ENCODE measurements at regions of chrX and their contacts with region 1.

Region 1: GRCh38 chrX:85243761-85244449 is at the starts of genes SATL1 and ZNF711:
- DNase-seq: peak; percentile 58
- H3K4me3 ChIP-seq: peak within 1 kb of the TSS; percentile 87
- H3K27ac ChIP-seq: peak within 1 kb of the TSS; percentile 27
- H3K4me1 ChIP-seq: peaks cover 3% of the 10 kb centered on the region
- CTCF ChIP-seq: no peak
- total RNA-seq, gene SATL1: 0.08 TPM in 1 of 2 replicates, not detected in the other
- total RNA-seq, gene ZNF711: 8.0 and 10.0 TPM in 2 replicates

Region 2: GRCh38 chrX:84737471-84737871 is 506.4 kb before region 1 on chrX:
- CTCF ChIA-PET with region 1: no interaction called
- POLR2A ChIA-PET with region 1: no interaction called
- intact Hi-C with region 1: no loop called
- DNase-seq: no peak
- H3K4me3 ChIP-seq: no peak overlapping the region
- H3K27ac ChIP-seq: no peak overlapping the region
- H3K4me1 ChIP-seq: no peaks in the 10 kb centered on the region
- CTCF ChIP-seq: no peak

Region 3: DNA sequence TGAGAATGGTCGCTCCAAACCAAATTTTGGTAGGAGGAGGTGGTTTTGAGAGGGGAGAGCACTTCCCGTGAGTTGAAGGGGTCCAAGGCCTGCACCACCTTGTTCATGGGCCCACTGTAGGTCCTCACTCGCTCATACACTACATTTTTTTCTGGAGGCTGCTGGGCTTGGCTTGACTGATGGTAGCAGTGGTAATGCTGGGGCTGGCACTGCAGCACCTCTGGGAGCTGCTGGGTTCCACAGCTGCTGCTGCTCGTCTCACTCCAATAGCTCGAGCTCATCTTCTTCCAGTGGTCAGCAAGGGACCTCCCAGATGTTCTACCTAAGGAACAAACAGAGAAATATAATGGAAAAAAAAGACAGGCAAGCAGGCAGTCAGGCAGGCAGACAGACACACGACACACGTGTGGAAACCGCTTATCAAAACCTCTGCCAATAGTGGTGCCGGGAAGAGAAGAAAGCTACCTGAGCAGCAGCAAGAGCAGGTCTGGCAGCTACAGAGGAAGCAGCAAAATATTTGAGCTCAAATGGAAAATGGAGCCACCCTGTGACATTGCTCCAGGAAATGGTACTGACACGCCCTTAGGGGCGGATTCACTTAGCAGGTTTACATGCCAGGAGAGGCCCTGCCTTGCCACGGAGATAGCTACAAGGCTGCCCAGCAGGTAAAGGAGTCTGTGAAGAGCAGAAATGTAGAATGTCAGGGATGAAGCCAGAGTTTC is 135.4 kb after region 1 on chrX and contains the start of gene POF1B:
- CTCF ChIA-PET with region 1: no interaction called
- POLR2A ChIA-PET with region 1: interaction called, 7 read pairs
- intact Hi-C with region 1: loop called (anchors 2 kb)
- DNase-seq: no peak
- H3K4me3 ChIP-seq: no peak within 1 kb of the TSS
- H3K27ac ChIP-seq: no peak within 1 kb of the TSS
- H3K4me1 ChIP-seq: no peaks in the 10 kb centered on the region
- CTCF ChIP-seq: no peak
- total RNA-seq, gene POF1B: not detected in 2 replicates